Naive thymus-derived CD4-positive, alpha-beta T cell (primary cell): ENCODE measurements at regions of chr22 and their contacts with region 1.

Region 1: DNA sequence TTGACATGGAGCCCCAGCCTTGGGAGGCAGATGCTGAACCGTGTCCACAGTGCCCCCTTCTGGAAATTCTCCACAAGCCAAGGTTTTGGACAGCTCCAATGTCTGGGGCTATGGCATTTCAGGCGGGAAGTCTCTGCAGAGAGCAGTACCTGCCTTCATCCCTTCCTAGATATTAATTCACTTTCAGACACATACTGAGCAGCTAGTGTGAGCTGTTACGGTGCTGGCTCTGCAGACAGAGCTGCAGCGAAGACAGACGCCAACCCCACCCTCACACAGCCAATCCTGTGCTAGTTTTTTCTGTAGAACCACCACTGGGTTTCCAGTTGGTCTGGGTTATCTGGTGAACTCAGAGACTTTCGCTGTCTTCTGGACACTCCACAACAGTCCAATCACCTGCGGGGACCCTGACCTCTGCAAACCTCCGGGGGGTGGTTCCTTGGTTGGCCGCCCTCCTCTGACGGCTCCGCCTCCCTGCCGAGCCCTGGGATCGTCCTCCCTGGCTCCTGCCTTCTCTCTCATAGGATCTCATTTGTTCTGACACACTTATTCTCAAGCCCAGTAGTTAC is 9.1 kb downstream of the LMF2 start:
- DNase-seq: peak in 8 of 9 donors; percentile 60 to 76 (median 70)
- ATAC-seq: peak; percentile 92
- H3K4me3 ChIP-seq: no peak overlapping the region
- H3K4me3 Mint-ChIP-seq: no peak overlapping the region
- H3K27ac ChIP-seq: no peak overlapping the region
- H3K27ac Mint-ChIP-seq: no peak overlapping the region
- H3K4me1 ChIP-seq: no peaks in the 10 kb centered on the region
- H3K4me1 Mint-ChIP-seq: peaks cover 3 to 10% (median 9%) of the 10 kb centered on the region in 7 donors
- H3K27me3 ChIP-seq: no peaks in the 10 kb centered on the region
- H3K27me3 Mint-ChIP-seq: peaks cover 0 to 5% (median 0%) of the 10 kb centered on the region in 5 donors

Region 2: GRCh38 chr22:50185384-50186087 is 312.9 kb before region 1 on chr22 and contains the start of gene TRABD:
- CTCF ChIA-PET with region 1: no interaction called
- POLR2A ChIA-PET with region 1: no interaction called
- intact Hi-C with region 1: no loop called
- DNase-seq: peak; percentile 76 to 89 (median 86)
- ATAC-seq: peak; percentile 87
- H3K4me3 ChIP-seq: peak within 1 kb of the TSS; percentile 83
- H3K4me3 Mint-ChIP-seq: peak within 1 kb of the TSS; percentile 88 to 98 (median 94)
- H3K27ac ChIP-seq: peak within 1 kb of the TSS; percentile 78
- H3K27ac Mint-ChIP-seq: peak within 1 kb of the TSS; percentile 82 to 98 (median 96)
- H3K4me1 ChIP-seq: peaks cover 28 to 32% of the 10 kb centered on the region in 2 donors
- H3K4me1 Mint-ChIP-seq: peaks cover 10 to 37% (median 23%) of the 10 kb centered on the region in 7 donors
- H3K27me3 ChIP-seq: no peaks in the 10 kb centered on the region
- H3K27me3 Mint-ChIP-seq: peaks cover 0 to 6% (median 0%) of the 10 kb centered on the region in 5 donors
- total RNA-seq, gene TRABD: 106 to 157 (median 124) TPM

Region 3: GRCh38 chr22:50250555-50251476 is 247.6 kb before region 1 on chr22 and contains the start of gene HDAC10:
- CTCF ChIA-PET with region 1: interaction called, 4 read pairs
- POLR2A ChIA-PET with region 1: interaction called, 5 read pairs
- intact Hi-C with region 1: loop called in 1 of 2 experiments (anchors 1 kb)
- DNase-seq: peak; percentile 60 to 86 (median 71)
- ATAC-seq: peak; percentile 78
- H3K4me3 ChIP-seq: peak within 1 kb of the TSS; percentile 71
- H3K4me3 Mint-ChIP-seq: peak within 1 kb of the TSS; percentile 61 to 88 (median 80)
- H3K27ac ChIP-seq: peak within 1 kb of the TSS; percentile 71
- H3K27ac Mint-ChIP-seq: peak within 1 kb of the TSS in 7 of 9 donors; percentile 31 to 80 (median 65)
- H3K4me1 ChIP-seq: peaks cover 25 to 38% of the 10 kb centered on the region in 2 donors
- H3K4me1 Mint-ChIP-seq: peaks cover 4 to 26% (median 17%) of the 10 kb centered on the region in 7 donors
- H3K27me3 ChIP-seq: no peaks in the 10 kb centered on the region
- H3K27me3 Mint-ChIP-seq: no peaks in the 10 kb centered on the region
- total RNA-seq, gene HDAC10: 95.9 to 139 (median 105) TPM

Region 4: DNA sequence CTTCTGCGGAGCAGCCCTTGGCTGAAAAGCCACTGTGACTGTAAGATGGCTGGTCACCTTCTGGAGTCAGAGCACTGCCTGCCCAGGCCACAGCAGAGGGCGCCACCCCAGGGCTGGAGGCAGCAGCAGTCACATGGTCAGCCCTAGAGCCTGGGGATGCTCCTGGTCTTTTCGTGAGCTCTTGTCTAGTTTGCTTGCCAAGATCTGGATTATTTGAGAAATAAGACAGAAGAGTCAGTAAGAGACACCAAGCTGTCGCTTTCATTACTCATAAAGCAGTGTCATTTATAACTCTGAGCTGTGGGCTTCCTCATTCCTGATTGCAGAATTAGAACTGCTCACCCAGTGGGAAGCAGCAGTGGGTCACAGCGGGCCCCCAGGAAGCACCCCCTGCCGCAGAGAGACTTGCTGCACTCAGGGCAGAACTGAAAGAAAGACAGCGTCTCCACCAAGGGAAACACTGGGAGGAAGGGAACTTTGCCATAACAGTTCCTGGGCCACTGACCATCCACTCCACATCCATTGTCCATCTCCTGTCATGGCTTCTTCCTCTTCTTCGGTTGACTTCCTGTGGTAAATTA is 98.6 kb before region 1 on chr22:
- CTCF ChIA-PET with region 1: interaction called, 5 read pairs
- POLR2A ChIA-PET with region 1: no interaction called
- intact Hi-C with region 1: loop called in 1 of 2 experiments (anchors 1 kb)
- DNase-seq: peak in 1 of 9 donors; percentile 34
- ATAC-seq: peak; percentile 78
- H3K4me3 ChIP-seq: no peak overlapping the region
- H3K4me3 Mint-ChIP-seq: peak overlapping the region in 1 of 10 donors; percentile 24
- H3K27ac ChIP-seq: peak overlapping the region; percentile 40
- H3K27ac Mint-ChIP-seq: peak overlapping the region; percentile 31 to 85 (median 66)
- H3K4me1 ChIP-seq: peaks cover 0 to 6% of the 10 kb centered on the region in 2 donors
- H3K4me1 Mint-ChIP-seq: peaks cover 19 to 45% (median 34%) of the 10 kb centered on the region in 7 donors
- H3K27me3 ChIP-seq: no peaks in the 10 kb centered on the region
- H3K27me3 Mint-ChIP-seq: no peaks in the 10 kb centered on the region

Region 5: DNA sequence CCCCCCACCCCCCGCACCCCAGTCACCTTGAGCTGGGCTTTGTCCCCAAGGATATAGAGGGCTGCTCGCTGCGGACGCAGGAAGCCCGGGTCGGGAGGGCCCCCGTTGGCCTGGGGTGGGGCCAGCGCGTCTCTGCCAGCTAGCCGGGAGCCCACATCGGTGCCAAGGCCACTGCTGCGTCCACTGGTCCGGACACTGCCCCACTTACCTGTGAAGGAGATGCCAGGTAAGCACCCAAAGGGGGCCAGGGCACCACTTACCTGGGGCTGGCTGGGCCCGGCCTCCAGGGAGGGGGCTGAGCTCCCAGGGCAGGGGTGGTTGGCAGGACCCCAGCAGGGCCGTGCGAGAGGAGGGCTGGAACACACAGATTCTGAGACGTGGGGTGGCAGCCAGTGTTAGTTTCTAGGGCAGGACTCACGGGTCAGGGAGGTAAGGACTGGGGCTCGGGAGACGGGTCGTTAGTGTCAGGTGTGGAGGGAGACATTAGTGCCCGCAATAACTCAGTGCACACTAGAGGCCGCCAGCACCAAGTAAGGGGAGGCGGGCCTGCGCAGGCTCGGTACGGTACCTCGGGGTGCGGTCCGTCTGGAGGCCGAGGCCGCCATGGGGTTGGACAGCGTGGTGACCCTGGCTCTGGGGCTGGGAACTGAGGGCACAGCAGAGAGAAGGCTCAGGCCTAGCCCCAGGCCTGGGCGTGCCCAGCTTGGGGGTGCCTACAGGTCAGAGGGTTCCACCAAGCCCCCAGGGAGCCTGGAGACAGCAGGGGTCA is 41.8 kb before region 1 on chr22:
- CTCF ChIA-PET with region 1: interaction called, 8 read pairs
- POLR2A ChIA-PET with region 1: no interaction called
- intact Hi-C with region 1: loop called (anchors 1 to 5 kb)
- DNase-seq: no peak
- ATAC-seq: peak; percentile 38
- H3K4me3 ChIP-seq: no peak overlapping the region
- H3K4me3 Mint-ChIP-seq: no peak overlapping the region
- H3K27ac ChIP-seq: no peak overlapping the region
- H3K27ac Mint-ChIP-seq: peak overlapping the region in 4 of 9 donors; percentile 19 to 71 (median 28)
- H3K4me1 ChIP-seq: no peaks in the 10 kb centered on the region
- H3K4me1 Mint-ChIP-seq: peaks cover 0 to 8% (median 0%) of the 10 kb centered on the region in 7 donors
- H3K27me3 ChIP-seq: no peaks in the 10 kb centered on the region
- H3K27me3 Mint-ChIP-seq: no peaks in the 10 kb centered on the region

Region 6: GRCh38 chr22:50474668-50475492 is 23.5 kb before region 1 on chr22 and contains the start of gene SBF1:
- CTCF ChIA-PET with region 1: interaction called, 8 read pairs
- POLR2A ChIA-PET with region 1: interaction called, 10 read pairs
- intact Hi-C with region 1: loop called in 1 of 2 experiments (anchors 1 kb)
- DNase-seq: peak; percentile 75 to 94 (median 85)
- ATAC-seq: peak; percentile 89
- H3K4me3 ChIP-seq: peak within 1 kb of the TSS; percentile 72
- H3K4me3 Mint-ChIP-seq: peak within 1 kb of the TSS; percentile 93 to 100 (median 96)
- H3K27ac ChIP-seq: peak within 1 kb of the TSS; percentile 90
- H3K27ac Mint-ChIP-seq: peak within 1 kb of the TSS; percentile 91 to 97 (median 93)
- H3K4me1 ChIP-seq: peaks cover 39 to 42% of the 10 kb centered on the region in 2 donors
- H3K4me1 Mint-ChIP-seq: peaks cover 29 to 56% (median 47%) of the 10 kb centered on the region in 7 donors
- H3K27me3 ChIP-seq: no peaks in the 10 kb centered on the region
- H3K27me3 Mint-ChIP-seq: peaks cover 0 to 19% (median 0%) of the 10 kb centered on the region in 5 donors
- total RNA-seq, gene SBF1: 161 to 209 (median 181) TPM

Region 7: DNA sequence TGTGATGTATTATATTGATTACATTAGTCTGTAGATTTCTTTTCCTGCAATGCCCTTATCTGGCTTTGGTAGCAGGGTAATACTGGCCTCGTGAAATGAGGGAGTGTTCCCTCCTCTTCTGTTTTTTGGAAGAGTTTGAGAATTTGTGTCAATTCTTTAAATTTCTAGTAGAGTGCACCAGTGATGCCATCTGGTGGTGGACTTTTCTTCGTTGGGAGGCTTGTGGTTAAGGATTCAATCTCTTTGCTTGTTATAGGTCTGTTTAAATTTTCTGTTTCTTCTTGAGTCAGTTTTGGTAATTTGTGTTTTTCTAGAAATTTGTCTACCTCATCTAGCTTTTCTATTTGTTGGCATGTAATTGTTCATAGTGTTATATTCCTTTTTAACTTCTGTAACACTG is 193.1 kb after region 1 on chr22:
- CTCF ChIA-PET with region 1: no interaction called
- POLR2A ChIA-PET with region 1: no interaction called
- intact Hi-C with region 1: loop called in 1 of 2 experiments (anchors 5 kb)
- DNase-seq: peak in 6 of 9 donors; percentile 16 to 45 (median 34)
- ATAC-seq: no peak
- H3K4me3 ChIP-seq: no peak overlapping the region
- H3K4me3 Mint-ChIP-seq: no peak overlapping the region
- H3K27ac ChIP-seq: no peak overlapping the region
- H3K27ac Mint-ChIP-seq: no peak overlapping the region
- H3K4me1 ChIP-seq: no peaks in the 10 kb centered on the region
- H3K4me1 Mint-ChIP-seq: peaks cover 0 to 7% (median 0%) of the 10 kb centered on the region in 7 donors
- H3K27me3 ChIP-seq: no peaks in the 10 kb centered on the region
- H3K27me3 Mint-ChIP-seq: peaks cover 0 to 23% (median 0%) of the 10 kb centered on the region in 5 donors